PC-9 (cell line): ENCODE measurements at regions of chr21 and their contacts with region 1.

Region 1: DNA sequence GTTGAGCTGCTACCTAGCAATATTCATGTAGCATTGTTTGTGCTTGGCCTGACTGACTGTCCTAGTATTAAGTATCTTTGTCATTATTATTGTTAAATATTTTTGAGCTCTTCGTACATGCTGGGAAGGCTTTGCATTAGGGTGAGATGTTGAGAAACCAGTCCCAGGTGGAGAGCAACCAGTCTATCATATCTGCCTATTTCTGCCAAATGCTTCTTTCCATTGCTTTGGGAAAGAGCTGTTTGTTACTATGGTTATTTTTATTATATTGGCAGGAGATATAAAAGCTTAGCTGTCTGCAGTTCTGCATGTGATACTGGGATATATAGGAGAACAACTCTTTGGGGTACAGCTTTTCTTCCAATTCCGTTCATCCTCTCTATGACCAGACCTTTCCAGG is 85.1 kb downstream of the CLDN17 start:
- DNase-seq: no peak
- H3K4me3 ChIP-seq: no peak overlapping the region
- H3K27ac ChIP-seq: no peak overlapping the region
- H3K4me1 ChIP-seq: no peaks in the 10 kb centered on the region
- H3K27me3 ChIP-seq: no peaks in the 10 kb centered on the region
- CTCF ChIP-seq: no peak

Region 2: GRCh38 chr21:30257773-30258172 is 176.3 kb after region 1 on chr21:
- CTCF ChIA-PET with region 1: interaction called, 13 read pairs
- POLR2A ChIA-PET with region 1: no interaction called
- intact Hi-C with region 1: no loop called
- DNase-seq: peak in 1 of 2 experiments; percentile 12
- H3K4me3 ChIP-seq: no peak overlapping the region
- H3K27ac ChIP-seq: no peak overlapping the region
- H3K4me1 ChIP-seq: no peaks in the 10 kb centered on the region
- H3K27me3 ChIP-seq: no peaks in the 10 kb centered on the region
- CTCF ChIP-seq: peak; percentile 51